ENCODE measurements at regions of chr4 and their contacts with region 1.

Region 1: GRCh38 chr4:187606581-187606980 is 389.0 kb upstream of the ZFP42 start:
- DNase-seq: peak; percentile 49
- H3K4me3 ChIP-seq: no peak overlapping the region
- H3K27ac ChIP-seq: no peak overlapping the region
- H3K4me1 ChIP-seq: no peaks in the 10 kb centered on the region
- CTCF ChIP-seq: peak; percentile 96

Region 2: GRCh38 chr4:189202182-189202868 is 1595.7 kb after region 1 on chr4:
- CTCF ChIA-PET with region 1: no interaction called
- POLR2A ChIA-PET with region 1: no interaction called
- intact Hi-C with region 1: loop called (anchors 5 kb)
- DNase-seq: peak; percentile 35
- H3K4me3 ChIP-seq: no peak overlapping the region
- H3K27ac ChIP-seq: no peak overlapping the region
- H3K4me1 ChIP-seq: no peaks in the 10 kb centered on the region
- CTCF ChIP-seq: peak; percentile 88

Measured in OCI-LY7 (cell line).